Activated CD8-positive, alpha-beta T cell treated with anti-CD3 and anti-CD28 coated beads for 36 hours (primary cell): ENCODE measurements at regions of chr1 and their contacts with region 1.

Region 1: DNA sequence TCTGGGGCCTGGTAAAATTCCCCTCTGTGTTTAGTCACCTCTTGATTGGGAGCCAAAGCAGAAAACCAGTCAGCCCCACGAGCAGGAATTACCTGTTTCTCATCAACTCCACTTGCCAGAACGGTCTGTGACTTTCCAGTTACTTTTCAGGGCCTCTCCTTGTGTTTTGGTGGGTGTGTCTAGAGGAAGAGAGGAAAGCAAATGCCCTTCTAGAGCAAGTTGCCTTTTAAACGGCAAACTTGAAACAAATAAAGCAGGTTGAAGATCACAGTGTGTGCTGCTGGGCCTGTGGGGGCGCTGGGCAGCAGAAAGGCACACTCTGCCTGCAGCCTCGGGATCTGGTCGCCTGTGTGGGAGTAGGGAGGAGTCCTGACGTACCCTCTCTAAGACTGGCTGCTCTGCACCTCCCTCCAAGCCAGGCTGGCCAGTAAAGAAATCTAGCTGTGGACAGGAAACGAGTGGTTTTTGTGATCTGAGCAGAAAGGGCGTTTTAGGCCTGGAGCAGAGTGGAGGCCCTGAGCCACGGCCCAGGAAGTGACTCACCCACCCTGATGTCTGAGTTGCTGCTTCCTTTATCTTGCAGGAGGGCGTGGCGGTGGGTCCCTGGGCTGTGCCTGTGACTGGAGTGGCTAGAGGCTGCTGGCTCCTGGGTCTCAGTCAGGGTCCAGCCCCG is 11.1 kb upstream of the S100A11 start:
- DNase-seq: peak; percentile 96
- ATAC-seq: peak; percentile 95
- H3K4me3 Mint-ChIP-seq: peak overlapping the region; percentile 78
- H3K27ac Mint-ChIP-seq: peak overlapping the region; percentile 98
- H3K4me1 Mint-ChIP-seq: peaks cover 17% of the 10 kb centered on the region
- H3K27me3 Mint-ChIP-seq: peaks cover 1% of the 10 kb centered on the region
- CTCF ChIP-seq: peak; percentile 69

Region 2: DNA sequence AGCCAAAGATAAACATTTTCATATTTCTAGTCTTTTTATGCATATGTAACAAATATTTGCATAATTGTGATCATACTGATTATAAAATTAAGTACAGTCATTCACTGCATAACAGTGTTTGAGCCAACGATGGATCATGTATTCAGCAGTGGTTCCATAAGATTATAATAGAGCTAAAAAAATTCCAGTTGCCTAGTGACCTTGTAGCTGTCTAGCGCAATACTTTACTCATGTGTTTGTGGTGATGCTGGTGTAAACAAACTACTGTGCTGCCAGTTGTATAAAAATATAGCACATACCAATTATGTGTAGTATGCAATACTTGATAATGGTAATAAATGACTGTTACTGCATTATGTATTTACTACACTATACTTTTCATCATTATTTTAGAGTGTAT is 52.1 kb before region 1 on chr1:
- CTCF ChIA-PET with region 1: no interaction called
- POLR2A ChIA-PET with region 1: no interaction called
- intact Hi-C with region 1: no loop called
- DNase-seq: no peak
- ATAC-seq: no peak
- H3K4me3 Mint-ChIP-seq: no peak overlapping the region
- H3K27ac Mint-ChIP-seq: no peak overlapping the region
- H3K4me1 Mint-ChIP-seq: peaks cover 33% of the 10 kb centered on the region
- H3K27me3 Mint-ChIP-seq: no peaks in the 10 kb centered on the region
- CTCF ChIP-seq: no peak

Region 3: GRCh38 chr1:152034646-152035405 is 13.0 kb before region 1 on chr1:
- CTCF ChIA-PET with region 1: interaction called, 59 read pairs
- POLR2A ChIA-PET with region 1: interaction called, 36 read pairs
- intact Hi-C with region 1: no loop called
- DNase-seq: peak; percentile 84
- ATAC-seq: peak; percentile 78
- H3K4me3 Mint-ChIP-seq: peak overlapping the region; percentile 92
- H3K27ac Mint-ChIP-seq: peak overlapping the region; percentile 93
- H3K4me1 Mint-ChIP-seq: peaks cover 34% of the 10 kb centered on the region
- H3K27me3 Mint-ChIP-seq: no peaks in the 10 kb centered on the region
- CTCF ChIP-seq: peak; percentile 83

Region 4: GRCh38 chr1:152061952-152062351 is 14.1 kb after region 1 on chr1:
- CTCF ChIA-PET with region 1: interaction called, 14 read pairs
- POLR2A ChIA-PET with region 1: interaction called, 3 read pairs
- intact Hi-C with region 1: no loop called
- DNase-seq: no peak
- ATAC-seq: no peak
- H3K4me3 Mint-ChIP-seq: no peak overlapping the region
- H3K27ac Mint-ChIP-seq: no peak overlapping the region
- H3K4me1 Mint-ChIP-seq: no peaks in the 10 kb centered on the region
- H3K27me3 Mint-ChIP-seq: peaks cover 22% of the 10 kb centered on the region
- CTCF ChIP-seq: no peak

Region 5: GRCh38 chr1:152110860-152111514 is 63.1 kb after region 1 on chr1:
- CTCF ChIA-PET with region 1: interaction called, 21 read pairs
- POLR2A ChIA-PET with region 1: interaction called, 4 read pairs
- intact Hi-C with region 1: no loop called
- DNase-seq: peak; percentile 43
- ATAC-seq: peak; percentile 66
- H3K4me3 Mint-ChIP-seq: no peak overlapping the region
- H3K27ac Mint-ChIP-seq: no peak overlapping the region
- H3K4me1 Mint-ChIP-seq: peaks cover 4% of the 10 kb centered on the region
- H3K27me3 Mint-ChIP-seq: peaks cover 19% of the 10 kb centered on the region
- CTCF ChIP-seq: no peak

Region 6: DNA sequence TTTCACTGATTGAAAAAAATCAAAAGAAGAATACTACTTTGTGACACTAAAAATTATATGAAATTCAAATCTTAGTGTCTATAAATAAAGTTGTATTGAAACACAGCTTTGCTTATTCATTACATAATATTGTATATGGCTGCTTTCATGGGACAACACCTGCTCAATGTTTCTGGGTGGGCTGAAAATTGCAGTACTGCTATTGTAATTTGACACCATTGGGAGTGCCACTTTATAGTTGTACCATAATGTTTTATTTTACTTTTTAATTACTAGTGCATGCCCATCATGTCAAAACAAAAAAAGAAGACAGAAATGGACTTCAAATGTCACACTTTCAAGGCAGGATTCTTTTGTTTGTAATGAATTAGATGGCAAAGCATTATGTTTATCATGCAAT is 127.7 kb after region 1 on chr1:
- CTCF ChIA-PET with region 1: interaction called, 315 read pairs
- POLR2A ChIA-PET with region 1: no interaction called
- intact Hi-C with region 1: no loop called
- DNase-seq: no peak
- ATAC-seq: no peak
- H3K4me3 Mint-ChIP-seq: no peak overlapping the region
- H3K27ac Mint-ChIP-seq: no peak overlapping the region
- H3K4me1 Mint-ChIP-seq: no peaks in the 10 kb centered on the region
- H3K27me3 Mint-ChIP-seq: peaks cover 5% of the 10 kb centered on the region
- CTCF ChIP-seq: no peak

Region 7: GRCh38 chr1:152347116-152347728 is 299.4 kb after region 1 on chr1:
- CTCF ChIA-PET with region 1: interaction called, 14 read pairs
- POLR2A ChIA-PET with region 1: no interaction called
- intact Hi-C with region 1: no loop called
- DNase-seq: peak; percentile 63
- ATAC-seq: peak; percentile 79
- H3K4me3 Mint-ChIP-seq: no peak overlapping the region
- H3K27ac Mint-ChIP-seq: no peak overlapping the region
- H3K4me1 Mint-ChIP-seq: peaks cover 7% of the 10 kb centered on the region
- H3K27me3 Mint-ChIP-seq: peaks cover 22% of the 10 kb centered on the region
- CTCF ChIP-seq: peak; percentile 94

Region 8: GRCh38 chr1:152440635-152441471 is 393.0 kb after region 1 on chr1:
- CTCF ChIA-PET with region 1: interaction called, 4 read pairs
- POLR2A ChIA-PET with region 1: no interaction called
- intact Hi-C with region 1: loop called (anchors 5 kb)
- DNase-seq: peak; percentile 76
- ATAC-seq: peak; percentile 99
- H3K4me3 Mint-ChIP-seq: no peak overlapping the region
- H3K27ac Mint-ChIP-seq: no peak overlapping the region
- H3K4me1 Mint-ChIP-seq: no peaks in the 10 kb centered on the region
- H3K27me3 Mint-ChIP-seq: peaks cover 24% of the 10 kb centered on the region
- CTCF ChIP-seq: peak; percentile 77